ENCODE measurements at regions of chr11 and their contacts with region 1.

Region 1: DNA sequence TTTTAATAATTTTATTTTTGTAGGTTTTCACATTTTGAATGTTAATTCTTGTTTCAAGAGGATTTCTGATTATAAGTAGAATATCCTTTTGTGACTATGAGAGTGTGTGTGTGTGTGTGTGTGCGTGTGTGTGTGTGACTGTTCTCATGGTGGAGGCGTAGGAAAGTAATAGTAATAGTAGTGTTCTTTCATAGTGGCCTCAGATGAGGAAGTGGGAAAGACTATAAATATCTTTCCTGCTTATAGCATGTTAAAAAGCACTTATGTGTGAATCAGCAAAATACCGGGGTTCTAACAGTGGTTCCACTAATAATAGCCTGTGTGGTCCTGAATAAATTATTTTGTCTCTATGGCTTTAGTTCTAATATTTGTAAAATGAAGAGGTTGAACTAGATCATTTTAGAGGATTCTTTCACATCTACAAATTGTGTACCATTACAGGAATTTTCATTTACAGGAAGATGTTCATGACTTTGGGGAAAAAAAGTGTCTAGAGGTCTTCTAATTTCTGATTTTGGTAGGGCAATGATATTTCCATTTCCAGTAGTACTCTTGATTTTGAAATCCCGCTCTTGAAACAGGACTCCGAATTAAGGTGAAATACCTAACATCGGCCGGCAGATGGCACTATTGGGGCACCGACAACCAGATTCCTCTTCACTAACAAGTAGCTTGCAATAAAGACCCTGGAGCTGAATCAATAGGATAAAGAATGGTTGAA is 29.9 kb upstream of the OR10G7 start:
- DNase-seq: peak; percentile 72
- H3K4me3 ChIP-seq: no peak overlapping the region
- H3K27ac ChIP-seq: no peak overlapping the region
- H3K4me1 ChIP-seq: peaks cover 0 to 19% (median 2%) of the 10 kb centered on the region in 4 donors
- H3K27me3 ChIP-seq: peaks cover 20% of the 10 kb centered on the region
- CTCF ChIP-seq: peak; percentile 63 to 82 (median 78)
- EP300 ChIP-seq: no peak
- POLR2A ChIP-seq: no peak

Region 2: DNA sequence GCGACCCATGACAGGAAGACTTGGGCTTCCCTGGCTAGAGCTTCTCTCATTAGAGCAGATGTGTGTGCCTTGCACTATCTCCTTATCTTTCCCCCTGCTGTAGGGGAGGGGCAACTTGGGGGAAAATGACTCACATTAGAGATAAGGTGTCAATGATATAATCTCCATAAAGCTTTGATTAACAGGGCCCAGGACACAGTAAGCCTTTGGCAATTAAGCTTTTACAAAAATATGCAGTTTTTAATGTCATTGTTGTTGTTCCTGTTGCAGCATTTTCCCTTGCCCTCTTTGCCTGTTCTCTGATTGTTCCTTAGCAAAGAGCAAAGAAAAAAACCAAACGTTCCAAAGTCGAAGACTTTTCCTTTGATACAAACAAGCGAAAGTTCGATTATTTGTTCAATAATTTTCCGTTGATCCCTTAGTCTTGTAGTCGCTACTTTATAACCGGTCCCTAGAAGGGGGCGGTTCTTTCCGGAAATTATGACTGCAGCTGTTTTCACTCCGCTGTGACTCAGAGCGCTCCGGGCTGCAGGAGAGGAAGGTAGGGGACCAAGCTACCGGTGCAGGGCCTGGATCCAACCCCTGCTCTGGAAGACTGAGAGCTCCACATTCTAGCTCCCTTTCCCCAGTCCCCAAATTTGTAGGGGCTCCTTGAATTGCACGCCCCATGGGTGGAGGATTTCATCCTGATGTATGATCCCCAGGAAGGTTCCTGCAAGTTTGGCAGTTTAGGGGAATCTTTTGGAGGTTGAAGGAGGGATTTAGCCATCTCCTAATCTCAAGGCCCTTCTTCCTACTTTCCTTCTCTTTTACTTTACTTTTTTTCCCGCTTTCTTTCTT is 44.1 kb after region 1 on chr11 and contains the start of gene VWA5A:
- in situ Hi-C with region 1: no loop called
- intact Hi-C with region 1: no loop called
- DNase-seq: peak; percentile 93
- H3K4me3 ChIP-seq: peak within 1 kb of the TSS; percentile 60 to 94 (median 72)
- H3K27ac ChIP-seq: peak within 1 kb of the TSS; percentile 83 to 89 (median 86)
- H3K4me1 ChIP-seq: peaks cover 3 to 23% (median 16%) of the 10 kb centered on the region in 4 donors
- H3K27me3 ChIP-seq: no peaks in the 10 kb centered on the region
- CTCF ChIP-seq: no peak
- EP300 ChIP-seq: no peak
- POLR2A ChIP-seq: peak; percentile 93
- total RNA-seq, gene VWA5A: 10.1 to 72.5 (median 37.2) TPM

Region 3: DNA sequence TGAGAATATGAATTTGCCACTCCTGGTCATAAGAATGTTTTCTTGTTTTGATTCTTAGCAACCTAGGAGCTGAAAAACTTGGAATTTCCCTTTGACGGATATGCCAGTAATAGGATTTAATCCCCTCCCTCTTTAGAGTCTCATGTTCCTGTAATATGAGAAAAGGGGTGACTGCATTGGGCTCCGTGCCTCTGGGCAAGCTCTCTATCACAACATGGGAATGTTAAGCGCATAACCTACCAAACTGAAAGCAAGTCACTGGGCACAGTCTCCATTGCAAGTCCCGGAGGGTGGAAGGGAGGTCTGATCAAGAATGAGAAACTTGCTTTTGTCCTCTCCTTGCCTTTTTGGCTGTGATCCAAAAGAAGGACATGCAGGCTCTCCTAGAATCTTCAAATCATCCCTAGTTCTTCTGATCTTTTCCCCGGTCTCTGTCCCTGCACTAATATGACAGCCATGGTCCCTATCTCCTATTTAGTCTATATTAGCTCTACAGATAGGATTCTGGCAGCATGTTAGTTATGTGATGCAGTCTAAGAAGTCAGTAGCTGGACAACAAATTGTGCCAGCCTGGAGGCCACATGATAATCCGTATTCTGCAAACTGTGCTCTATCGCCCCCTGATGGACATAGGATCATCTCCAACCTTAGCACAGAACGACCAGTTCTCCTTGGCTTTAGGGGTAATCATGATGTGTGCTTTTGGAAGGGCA is 123.8 kb after region 1 on chr11:
- in situ Hi-C with region 1: loop called in 2 of 4 experiments (anchors 10 kb)
- intact Hi-C with region 1: no loop called
- DNase-seq: peak; percentile 65
- H3K4me3 ChIP-seq: no peak overlapping the region
- H3K27ac ChIP-seq: peak overlapping the region in 3 of 4 donors; percentile 28 to 56 (median 53)
- H3K4me1 ChIP-seq: peaks cover 0 to 16% (median 5%) of the 10 kb centered on the region in 4 donors
- H3K27me3 ChIP-seq: no peaks in the 10 kb centered on the region
- CTCF ChIP-seq: peak; percentile 50 to 66 (median 63)
- EP300 ChIP-seq: no peak
- POLR2A ChIP-seq: no peak

Region 4: DNA sequence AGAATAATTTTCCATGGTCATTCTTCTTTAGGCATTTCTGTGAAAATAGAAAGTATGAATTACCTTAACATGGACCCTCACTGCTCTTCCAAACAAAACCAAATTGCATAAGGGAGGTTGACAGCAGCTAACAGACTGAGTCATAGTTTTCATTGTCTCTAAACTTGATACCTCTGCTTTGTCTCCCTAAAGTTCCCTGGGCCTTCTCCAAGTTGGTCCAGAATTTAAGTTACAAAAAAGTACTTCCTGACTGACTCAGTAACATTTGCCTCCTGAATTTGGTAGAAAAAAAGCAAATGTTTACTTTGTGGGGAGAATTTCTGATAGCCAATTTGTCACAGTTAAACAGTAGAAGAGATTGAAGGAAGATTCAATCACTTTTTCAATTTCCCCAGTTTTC is 239.7 kb after region 1 on chr11:
- in situ Hi-C with region 1: no loop called
- intact Hi-C with region 1: no loop called
- DNase-seq: no peak
- H3K4me3 ChIP-seq: no peak overlapping the region
- H3K27ac ChIP-seq: no peak overlapping the region
- H3K4me1 ChIP-seq: peaks cover 0 to 10% (median 0%) of the 10 kb centered on the region in 4 donors
- H3K27me3 ChIP-seq: no peaks in the 10 kb centered on the region
- CTCF ChIP-seq: no peak
- EP300 ChIP-seq: no peak
- POLR2A ChIP-seq: no peak

Region 5: DNA sequence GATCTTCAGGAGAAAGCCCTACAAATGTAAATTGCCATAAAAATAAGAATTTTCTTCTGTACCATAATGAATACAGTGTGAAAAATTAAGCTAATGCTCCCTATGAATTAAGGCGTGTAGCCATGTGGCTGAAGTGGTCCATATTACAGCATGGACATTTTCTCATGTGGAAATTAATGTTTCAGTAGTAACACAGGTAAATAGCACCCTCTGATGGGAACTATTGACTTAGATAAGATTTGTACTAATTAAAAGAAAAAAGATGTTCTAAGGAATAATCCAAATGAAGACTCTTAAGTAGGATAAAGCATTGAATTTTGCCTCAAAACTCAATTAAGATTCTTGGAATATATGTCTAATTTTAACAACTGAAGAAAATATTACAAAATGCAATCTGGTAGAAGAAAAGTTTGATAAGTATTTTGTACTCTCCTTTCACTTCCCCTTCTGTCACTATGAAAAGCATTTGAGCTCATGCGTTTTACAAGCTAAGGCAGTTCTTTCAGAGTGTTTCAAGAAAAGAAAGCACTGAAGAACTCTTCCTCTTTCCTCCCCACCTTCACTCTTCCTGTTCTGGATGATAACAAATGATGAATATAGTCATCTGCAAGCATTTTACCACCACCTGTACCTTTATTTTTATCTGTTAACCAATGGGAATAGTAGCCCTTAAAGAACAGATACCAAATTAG is 258.9 kb after region 1 on chr11:
- in situ Hi-C with region 1: no loop called
- intact Hi-C with region 1: no loop called
- DNase-seq: no peak
- H3K4me3 ChIP-seq: no peak overlapping the region
- H3K27ac ChIP-seq: no peak overlapping the region
- H3K4me1 ChIP-seq: no peaks in the 10 kb centered on the region
- H3K27me3 ChIP-seq: no peaks in the 10 kb centered on the region
- CTCF ChIP-seq: peak in 2 of 5 experiments; percentile 3 to 8
- EP300 ChIP-seq: no peak
- POLR2A ChIP-seq: no peak

Region 6: DNA sequence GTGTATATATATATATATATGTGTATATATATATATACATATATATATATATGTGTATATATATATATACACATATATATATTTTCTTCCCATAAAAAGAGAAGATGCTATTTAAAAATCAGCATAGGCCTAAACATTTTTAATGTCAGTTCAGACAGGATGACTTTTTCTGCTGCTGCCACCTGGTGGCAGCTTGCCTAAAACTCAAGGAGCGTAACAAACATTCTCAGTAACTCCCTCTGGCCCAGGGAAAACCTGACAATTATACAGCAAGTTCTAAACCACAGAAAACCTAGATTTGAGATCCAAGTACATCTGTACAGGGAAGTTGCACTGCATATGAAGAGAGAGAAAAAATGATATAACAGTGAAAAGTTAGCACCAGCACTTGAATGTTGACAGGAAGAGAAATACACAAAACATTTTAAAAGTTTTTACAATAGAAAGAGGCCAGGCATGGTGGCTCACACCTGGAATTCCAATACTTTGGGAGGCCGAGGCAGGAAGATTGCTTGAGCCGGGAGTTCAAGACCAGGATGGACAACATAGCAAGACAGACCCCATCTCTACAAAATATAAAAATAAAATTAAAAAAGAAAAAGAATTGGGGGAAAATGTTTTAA is 515.3 kb after region 1 on chr11:
- in situ Hi-C with region 1: loop called in 3 of 4 experiments (anchors 25 kb)
- intact Hi-C with region 1: loop called (anchors 10 kb)
- DNase-seq: peak; percentile 44
- H3K4me3 ChIP-seq: no peak overlapping the region
- H3K27ac ChIP-seq: no peak overlapping the region
- H3K4me1 ChIP-seq: peaks cover 0 to 12% (median 6%) of the 10 kb centered on the region in 4 donors
- H3K27me3 ChIP-seq: peaks cover 60% of the 10 kb centered on the region
- CTCF ChIP-seq: peak; percentile 42 to 58 (median 53)
- EP300 ChIP-seq: no peak
- POLR2A ChIP-seq: no peak

Region 7: GRCh38 chr11:124934862-124935547 is 863.9 kb after region 1 on chr11:
- in situ Hi-C with region 1: no loop called
- intact Hi-C with region 1: no loop called
- DNase-seq: no peak
- H3K4me3 ChIP-seq: no peak overlapping the region
- H3K27ac ChIP-seq: no peak overlapping the region
- H3K4me1 ChIP-seq: no peaks in the 10 kb centered on the region
- H3K27me3 ChIP-seq: peaks cover 13% of the 10 kb centered on the region
- CTCF ChIP-seq: no peak
- EP300 ChIP-seq: no peak
- POLR2A ChIP-seq: no peak